ENCODE measurements at regions of chr11 and their contacts with region 1.

Region 1: GRCh38 chr11:119373921-119374631 is 7.4 kb downstream of the USP2 start:
- DNase-seq: peak; percentile 73 to 78
- ATAC-seq: peak in 6 of 8 donors; percentile 3 to 30 (median 16)
- H3K4me3 ChIP-seq: peak overlapping the region in 2 of 10 donors; percentile 2 to 18
- H3K27ac ChIP-seq: peak overlapping the region in 8 of 10 donors; percentile 82 to 98 (median 89)
- H3K4me1 ChIP-seq: peaks cover 24 to 87% (median 72%) of the 10 kb centered on the region in 9 donors
- H3K27me3 ChIP-seq: no peaks in the 10 kb centered on the region
- CTCF ChIP-seq: peak; percentile 81 to 91 (median 89)

Region 2: DNA sequence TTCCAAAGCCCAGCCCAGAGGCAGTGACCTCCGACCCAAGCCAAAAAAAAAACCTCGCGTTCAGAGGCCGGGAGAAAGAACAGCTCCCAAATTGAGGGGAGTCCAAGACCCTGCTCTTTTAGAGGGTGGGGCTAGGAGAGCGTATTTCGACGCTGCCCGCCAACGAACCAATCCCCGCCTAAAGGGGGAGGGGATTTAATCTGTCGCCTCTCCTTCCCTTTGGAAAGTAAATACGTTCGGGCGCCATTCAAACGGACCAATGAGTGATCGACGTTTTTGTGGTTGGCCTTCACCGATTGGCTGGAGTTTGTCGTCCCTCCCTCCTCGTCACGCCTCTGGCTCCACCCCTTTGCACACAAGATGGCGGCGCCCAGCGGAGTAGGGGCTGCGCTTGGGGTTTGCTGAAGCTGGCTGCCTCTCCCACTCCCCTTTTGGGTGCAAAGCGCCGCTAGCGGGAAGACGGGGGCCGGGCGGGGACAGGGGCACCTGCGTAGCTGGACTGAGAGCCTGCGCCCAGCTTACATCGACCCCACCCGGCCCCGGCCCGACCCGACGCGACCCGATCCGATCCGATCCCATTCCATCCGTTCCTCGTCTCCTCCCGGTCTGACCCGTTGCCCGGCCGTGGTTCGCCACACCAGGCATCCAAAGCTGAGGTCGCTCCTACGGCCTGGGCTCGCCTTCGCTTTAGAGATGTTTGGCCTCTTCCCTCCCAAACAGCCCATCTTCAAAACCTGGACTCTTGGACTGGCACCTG is 39.7 kb before region 1 on chr11 and contains the start of gene RNF26:
- intact Hi-C with region 1: loop called in 2 of 10 experiments (anchors 5 kb)
- DNase-seq: peak; percentile 90 to 97
- ATAC-seq: peak; percentile 87 to 96 (median 94)
- H3K4me3 ChIP-seq: peak within 1 kb of the TSS; percentile 82 to 99 (median 90)
- H3K27ac ChIP-seq: peak within 1 kb of the TSS in 9 of 10 donors; percentile 77 to 92 (median 86)
- H3K4me1 ChIP-seq: peaks cover 14 to 46% (median 40%) of the 10 kb centered on the region in 9 donors
- H3K27me3 ChIP-seq: peaks cover 0 to 11% (median 0%) of the 10 kb centered on the region in 7 donors
- CTCF ChIP-seq: no peak
- total RNA-seq, gene RNF26: 11.1 to 17.6 (median 13.4) TPM

Region 3: GRCh38 chr11:119356349-119357031 is 17.6 kb before region 1 on chr11:
- intact Hi-C with region 1: loop called in 5 of 10 experiments (anchors 1 to 2 kb)
- DNase-seq: peak; percentile 81 to 84
- ATAC-seq: peak; percentile 66 to 86 (median 76)
- H3K4me3 ChIP-seq: peak overlapping the region; percentile 36 to 63 (median 58)
- H3K27ac ChIP-seq: peak overlapping the region; percentile 27 to 98 (median 66)
- H3K4me1 ChIP-seq: peaks cover 19 to 73% (median 42%) of the 10 kb centered on the region in 9 donors
- H3K27me3 ChIP-seq: peaks cover 0 to 7% (median 0%) of the 10 kb centered on the region in 7 donors
- CTCF ChIP-seq: peak; percentile 70 to 93 (median 86)